ENCODE measurements at regions of chr6 and their contacts with region 1.

Region 1: GRCh38 chr6:43937236-43938164 is 167.5 kb downstream of the VEGFA start:
- DNase-seq: peak; percentile 73 to 84 (median 81)
- ATAC-seq: peak; percentile 79
- H3K4me3 ChIP-seq: no peak overlapping the region
- H3K27ac ChIP-seq: peak overlapping the region; percentile 32
- H3K4me1 ChIP-seq: peaks cover 46 to 52% of the 10 kb centered on the region in 2 experiments
- H3K27me3 ChIP-seq: no peaks in the 10 kb centered on the region
- CTCF ChIP-seq: no peak
- EP300 ChIP-seq: peak; percentile 80
- POLR2A ChIP-seq: no peak
- RAD21 ChIP-seq: peak; percentile 10 to 25; a peak in 2 of 4 replicates

Region 2: GRCh38 chr6:44034391-44034861 is 96.9 kb after region 1 on chr6:
- CTCF ChIA-PET with region 1: no interaction called
- POLR2A ChIA-PET with region 1: no interaction called
- in situ Hi-C with region 1: no loop called
- intact Hi-C with region 1: no loop called
- DNase-seq: no peak
- ATAC-seq: no peak
- H3K4me3 ChIP-seq: no peak overlapping the region
- H3K27ac ChIP-seq: no peak overlapping the region
- H3K4me1 ChIP-seq: peaks cover 11 to 15% of the 10 kb centered on the region in 2 experiments; a peak in 4 of 5 replicates
- H3K27me3 ChIP-seq: no peaks in the 10 kb centered on the region; a peak in 1 of 5 replicates
- CTCF ChIP-seq: no peak
- EP300 ChIP-seq: no peak
- POLR2A ChIP-seq: no peak
- RAD21 ChIP-seq: no peak

Region 3: DNA sequence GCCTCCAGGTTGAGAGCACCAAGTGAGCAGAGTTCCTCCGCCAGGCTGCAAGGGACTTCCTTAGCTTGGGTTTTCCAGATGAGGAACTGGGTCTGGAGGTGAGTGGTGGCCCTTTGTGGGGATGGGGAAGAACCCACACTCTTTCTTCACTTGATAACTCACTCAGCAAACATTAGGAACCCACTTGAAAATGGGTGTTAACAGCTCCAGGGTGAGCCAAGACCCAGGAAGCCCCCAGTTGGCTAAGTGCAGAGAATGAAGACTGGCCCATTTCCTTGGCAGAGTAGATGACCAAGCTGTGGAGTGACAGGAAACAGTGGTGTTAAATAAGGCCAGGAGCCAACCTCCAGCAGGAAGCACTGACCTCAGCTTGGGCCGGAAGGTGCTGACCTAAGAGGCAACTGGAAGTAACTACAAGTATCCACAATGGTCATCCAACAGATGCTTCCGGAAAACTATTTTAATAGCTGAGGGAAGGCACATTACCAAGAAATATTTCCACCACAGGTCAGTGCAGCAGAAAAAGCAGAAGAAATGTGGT is 167.1 kb after region 1 on chr6:
- CTCF ChIA-PET with region 1: no interaction called
- POLR2A ChIA-PET with region 1: interaction called, 17 read pairs
- in situ Hi-C with region 1: no loop called
- intact Hi-C with region 1: no loop called
- DNase-seq: no peak
- ATAC-seq: no peak
- H3K4me3 ChIP-seq: no peak overlapping the region
- H3K27ac ChIP-seq: no peak overlapping the region
- H3K4me1 ChIP-seq: peaks cover 0 to 6% of the 10 kb centered on the region in 2 experiments; a peak in 2 of 5 replicates
- H3K27me3 ChIP-seq: no peaks in the 10 kb centered on the region
- CTCF ChIP-seq: no peak
- EP300 ChIP-seq: no peak
- POLR2A ChIP-seq: no peak
- RAD21 ChIP-seq: no peak